ENCODE measurements at regions of chr6 and their contacts with region 1.

Region 1: GRCh38 chr6:52995913-52996645 is 995 bp upstream of the GSTA4 start:
- DNase-seq: peak in 6 of 10 donors; percentile 11 to 46 (median 26)
- ATAC-seq: peak; percentile 16 to 17
- H3K4me3 Mint-ChIP-seq: peak overlapping the region; percentile 88 to 99 (median 94)
- H3K27ac Mint-ChIP-seq: peak overlapping the region; percentile 97 to 100 (median 99)
- H3K4me1 Mint-ChIP-seq: peaks cover 20 to 30% (median 23%) of the 10 kb centered on the region in 4 donors
- H3K27me3 Mint-ChIP-seq: peaks cover 0 to 5% (median 2%) of the 10 kb centered on the region in 5 donors

Region 2: DNA sequence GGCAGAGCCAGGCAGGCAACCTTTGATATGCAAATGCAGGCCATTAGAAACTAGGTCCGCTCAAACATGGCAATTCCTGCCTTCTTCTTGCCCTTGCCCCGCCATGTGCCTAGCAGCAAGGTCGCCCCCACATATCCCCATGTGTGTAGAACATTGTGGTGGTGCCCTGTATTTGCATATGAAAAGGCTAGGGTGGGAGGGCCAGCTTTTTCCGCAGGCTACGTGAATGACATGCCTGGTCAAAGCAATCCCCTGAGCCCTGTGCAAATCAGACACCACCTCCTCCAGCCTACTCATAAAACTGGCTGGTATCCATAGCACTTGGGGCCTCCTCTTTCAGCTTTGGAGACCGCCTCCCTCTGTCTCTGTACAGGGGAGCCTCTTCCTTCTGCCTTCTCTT is 264.4 kb before region 1 on chr6:
- POLR2A ChIA-PET with region 1: no interaction called
- DNase-seq: no peak
- ATAC-seq: no peak
- H3K4me3 Mint-ChIP-seq: no peak overlapping the region
- H3K27ac Mint-ChIP-seq: no peak overlapping the region
- H3K4me1 Mint-ChIP-seq: no peaks in the 10 kb centered on the region
- H3K27me3 Mint-ChIP-seq: no peaks in the 10 kb centered on the region

Region 3: GRCh38 chr6:52984247-52984646 is 11.8 kb before region 1 on chr6:
- POLR2A ChIA-PET with region 1: interaction called, 21 read pairs
- DNase-seq: peak in 9 of 10 donors; percentile 14 to 79 (median 47)
- ATAC-seq: peak; percentile 96 to 98
- H3K4me3 Mint-ChIP-seq: peak overlapping the region; percentile 52 to 81 (median 74)
- H3K27ac Mint-ChIP-seq: peak overlapping the region in 6 of 10 donors; percentile 12 to 54 (median 30)
- H3K4me1 Mint-ChIP-seq: peaks cover 31 to 41% (median 39%) of the 10 kb centered on the region in 4 donors
- H3K27me3 Mint-ChIP-seq: peaks cover 12 to 50% (median 19%) of the 10 kb centered on the region in 5 donors

Region 4: GRCh38 chr6:53064726-53065215 is 68.7 kb after region 1 on chr6:
- POLR2A ChIA-PET with region 1: interaction called, 19 read pairs
- DNase-seq: peak; percentile 85 to 97 (median 95)
- ATAC-seq: peak; percentile 77 to 81
- H3K4me3 Mint-ChIP-seq: peak overlapping the region; percentile 95 to 100 (median 99)
- H3K27ac Mint-ChIP-seq: peak overlapping the region; percentile 85 to 99 (median 97)
- H3K4me1 Mint-ChIP-seq: peaks cover 28 to 67% (median 59%) of the 10 kb centered on the region in 4 donors
- H3K27me3 Mint-ChIP-seq: no peaks in the 10 kb centered on the region